ENCODE measurements at regions of chr10 and their contacts with region 1.

Region 1: GRCh38 chr10:95363303-95363912 is 72.6 kb upstream of the PDLIM1 start:
- DNase-seq: peak in 9 of 14 experiments; percentile 6 to 76 (median 24)
- ATAC-seq: peak; percentile 76
- H3K4me3 ChIP-seq: no peak overlapping the region
- H3K4me3 Mint-ChIP-seq: no peak overlapping the region
- H3K27ac ChIP-seq: no peak overlapping the region
- H3K27ac Mint-ChIP-seq: no peak overlapping the region
- H3K4me1 ChIP-seq: no peaks in the 10 kb centered on the region
- H3K4me1 Mint-ChIP-seq: no peaks in the 10 kb centered on the region
- H3K27me3 ChIP-seq: no peaks in the 10 kb centered on the region
- H3K27me3 Mint-ChIP-seq: peaks cover 17% of the 10 kb centered on the region
- CTCF ChIP-seq: peak; percentile 95

Region 2: DNA sequence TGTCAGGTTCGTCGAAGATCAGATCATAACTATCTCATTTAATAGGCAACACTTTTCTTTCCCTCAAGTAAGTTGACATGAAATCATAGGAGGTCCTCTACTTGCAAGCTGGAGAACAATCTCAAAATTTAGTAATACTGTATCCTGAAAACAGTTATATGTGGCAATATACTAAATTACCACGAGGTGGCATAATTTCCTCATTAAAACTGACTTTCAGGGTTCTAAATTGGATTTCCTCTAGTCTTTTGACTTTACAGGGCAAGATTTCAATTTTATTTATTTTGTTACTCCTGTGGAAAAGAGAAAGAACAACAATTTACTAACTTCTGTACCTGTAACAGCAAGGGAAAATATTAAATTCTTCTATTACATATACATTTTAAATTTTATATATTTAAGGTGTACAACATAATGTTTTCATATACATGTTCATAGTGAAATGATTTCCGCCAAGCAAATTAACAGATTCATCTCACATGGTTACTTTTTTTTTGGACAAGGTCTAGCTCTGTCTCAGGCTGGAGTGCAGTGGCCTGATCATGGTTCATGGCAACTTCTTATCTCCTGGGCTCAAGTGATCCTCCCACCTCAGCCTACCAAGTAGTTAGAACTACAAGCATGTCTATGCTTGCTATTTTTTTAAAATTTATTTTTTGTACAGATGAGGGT is 733.3 kb before region 1 on chr10:
- CTCF ChIA-PET with region 1: no interaction called
- POLR2A ChIA-PET with region 1: no interaction called
- intact Hi-C with region 1: loop called in 1 of 2 experiments (anchors 5 kb)
- DNase-seq: peak in 2 of 14 experiments; percentile 3 to 11
- ATAC-seq: no peak
- H3K4me3 ChIP-seq: no peak overlapping the region
- H3K4me3 Mint-ChIP-seq: no peak overlapping the region
- H3K27ac ChIP-seq: no peak overlapping the region
- H3K27ac Mint-ChIP-seq: no peak overlapping the region
- H3K4me1 ChIP-seq: no peaks in the 10 kb centered on the region
- H3K4me1 Mint-ChIP-seq: no peaks in the 10 kb centered on the region
- H3K27me3 ChIP-seq: no peaks in the 10 kb centered on the region
- H3K27me3 Mint-ChIP-seq: no peaks in the 10 kb centered on the region
- CTCF ChIP-seq: peak; percentile 63

Region 3: DNA sequence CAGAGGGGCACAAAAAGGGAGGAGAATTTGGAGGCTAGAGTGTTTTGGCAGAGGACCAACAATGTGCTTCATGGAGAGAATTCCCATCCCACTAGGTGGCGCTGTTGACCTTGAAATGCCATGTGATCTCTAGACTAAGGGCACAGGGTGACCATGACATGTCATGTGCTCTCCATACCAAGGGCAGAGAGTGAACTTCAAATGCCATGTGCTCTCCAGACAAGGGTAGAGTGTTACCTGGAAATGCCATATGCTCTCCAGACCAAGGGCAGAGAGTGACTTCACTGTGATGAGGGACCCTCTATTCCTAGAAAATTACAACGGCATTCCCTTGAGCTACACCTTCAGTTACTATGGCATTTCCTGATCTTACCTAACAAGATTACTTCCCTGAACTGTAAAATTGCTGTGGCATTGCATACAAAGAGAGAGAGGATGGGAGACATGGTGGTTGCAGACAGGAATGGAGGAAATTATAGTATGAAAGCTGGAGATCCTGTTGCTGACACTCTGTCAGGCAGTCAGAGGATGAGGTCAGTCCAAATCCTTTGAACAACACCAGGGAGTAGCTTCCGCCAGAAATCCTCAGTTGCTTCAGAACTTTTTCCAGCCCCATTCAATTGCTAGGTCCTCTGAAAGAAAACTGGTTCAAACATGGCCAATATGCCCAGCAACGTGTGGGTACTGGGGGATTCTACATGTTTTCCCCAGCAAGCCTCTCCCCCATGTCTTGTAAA is 230.2 kb before region 1 on chr10:
- CTCF ChIA-PET with region 1: no interaction called
- POLR2A ChIA-PET with region 1: no interaction called
- intact Hi-C with region 1: loop called in 1 of 2 experiments (anchors 1 kb)
- DNase-seq: peak; percentile 18 to 78 (median 44)
- ATAC-seq: no peak
- H3K4me3 ChIP-seq: no peak overlapping the region
- H3K4me3 Mint-ChIP-seq: no peak overlapping the region
- H3K27ac ChIP-seq: no peak overlapping the region
- H3K27ac Mint-ChIP-seq: no peak overlapping the region
- H3K4me1 ChIP-seq: no peaks in the 10 kb centered on the region
- H3K4me1 Mint-ChIP-seq: no peaks in the 10 kb centered on the region
- H3K27me3 ChIP-seq: no peaks in the 10 kb centered on the region
- H3K27me3 Mint-ChIP-seq: no peaks in the 10 kb centered on the region
- CTCF ChIP-seq: peak; percentile 47

Region 4: GRCh38 chr10:95183271-95184230 is 179.9 kb before region 1 on chr10:
- CTCF ChIA-PET with region 1: no interaction called
- POLR2A ChIA-PET with region 1: no interaction called
- intact Hi-C with region 1: loop called in 1 of 2 experiments (anchors 2 kb)
- DNase-seq: peak; percentile 9 to 77 (median 52)
- ATAC-seq: peak; percentile 76
- H3K4me3 ChIP-seq: peak overlapping the region; percentile 52
- H3K4me3 Mint-ChIP-seq: peak overlapping the region; percentile 75
- H3K27ac ChIP-seq: no peak overlapping the region
- H3K27ac Mint-ChIP-seq: no peak overlapping the region
- H3K4me1 ChIP-seq: peaks cover 5% of the 10 kb centered on the region
- H3K4me1 Mint-ChIP-seq: peaks cover 8% of the 10 kb centered on the region
- H3K27me3 ChIP-seq: peaks cover 4 to 8% of the 10 kb centered on the region in 2 experiments
- H3K27me3 Mint-ChIP-seq: peaks cover 25% of the 10 kb centered on the region
- CTCF ChIP-seq: peak; percentile 70

Region 5: GRCh38 chr10:95246579-95247051 is 116.8 kb before region 1 on chr10:
- CTCF ChIA-PET with region 1: interaction called, 4 read pairs
- POLR2A ChIA-PET with region 1: no interaction called
- intact Hi-C with region 1: loop called (anchors 1 to 2 kb)
- DNase-seq: peak; percentile 16 to 75 (median 34)
- ATAC-seq: no peak
- H3K4me3 ChIP-seq: no peak overlapping the region
- H3K4me3 Mint-ChIP-seq: no peak overlapping the region
- H3K27ac ChIP-seq: no peak overlapping the region
- H3K27ac Mint-ChIP-seq: no peak overlapping the region
- H3K4me1 ChIP-seq: no peaks in the 10 kb centered on the region
- H3K4me1 Mint-ChIP-seq: no peaks in the 10 kb centered on the region
- H3K27me3 ChIP-seq: no peaks in the 10 kb centered on the region
- H3K27me3 Mint-ChIP-seq: peaks cover 11% of the 10 kb centered on the region
- CTCF ChIP-seq: peak; percentile 58

Region 6: DNA sequence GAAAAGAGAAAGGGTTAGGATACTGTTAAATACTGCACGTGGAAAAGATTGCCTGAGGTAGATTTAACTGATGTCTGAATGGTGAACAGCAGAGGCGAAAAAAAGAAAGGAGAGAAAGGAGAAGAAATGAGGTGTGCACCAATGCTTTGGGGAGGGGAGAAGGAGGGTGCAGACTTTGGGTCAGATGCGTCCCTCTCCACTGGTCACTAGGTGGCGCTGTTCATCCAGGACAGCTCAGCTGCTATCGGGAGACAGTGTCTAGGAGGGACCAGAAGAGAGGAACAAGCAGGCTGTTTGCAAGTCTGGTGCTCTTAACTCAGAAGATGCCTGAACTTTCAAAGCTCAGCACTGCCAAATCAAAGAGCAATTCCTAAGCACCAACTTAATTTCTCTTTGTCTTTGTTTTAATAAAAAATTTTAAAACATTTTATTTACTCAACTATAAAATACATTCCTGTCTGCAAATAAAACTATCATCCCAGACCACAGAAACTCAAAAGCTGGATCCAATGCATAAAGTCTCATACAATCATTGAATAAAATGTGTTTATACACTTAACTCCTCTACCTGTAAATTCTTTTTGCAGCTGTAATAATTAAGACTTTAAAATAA is 11.3 kb after region 1 on chr10:
- CTCF ChIA-PET with region 1: interaction called, 21 read pairs
- POLR2A ChIA-PET with region 1: no interaction called
- intact Hi-C with region 1: no loop called
- DNase-seq: peak in 12 of 14 experiments; percentile 2 to 70 (median 17)
- ATAC-seq: no peak
- H3K4me3 ChIP-seq: no peak overlapping the region
- H3K4me3 Mint-ChIP-seq: no peak overlapping the region
- H3K27ac ChIP-seq: no peak overlapping the region
- H3K27ac Mint-ChIP-seq: no peak overlapping the region
- H3K4me1 ChIP-seq: no peaks in the 10 kb centered on the region
- H3K4me1 Mint-ChIP-seq: no peaks in the 10 kb centered on the region
- H3K27me3 ChIP-seq: no peaks in the 10 kb centered on the region
- H3K27me3 Mint-ChIP-seq: peaks cover 20% of the 10 kb centered on the region
- CTCF ChIP-seq: peak; percentile 50

Measured in CD4-positive, alpha-beta T cell (primary cell).